ENCODE measurements at regions of chr12 and their contacts with region 1.

Region 1: GRCh38 chr12:7099290-7099996 is 7.2 kb upstream of the C1R start:
- DNase-seq: peak in 1 of 3 donors; percentile 40
- ATAC-seq: no peak
- H3K4me3 ChIP-seq: no peak overlapping the region
- H3K27ac ChIP-seq: no peak overlapping the region
- H3K4me1 ChIP-seq: peaks cover 0 to 20% (median under 1%) of the 10 kb centered on the region in 4 donors
- H3K27me3 ChIP-seq: no peaks in the 10 kb centered on the region
- CTCF ChIP-seq: no peak
- POLR2A ChIP-seq: no peak

Region 2: DNA sequence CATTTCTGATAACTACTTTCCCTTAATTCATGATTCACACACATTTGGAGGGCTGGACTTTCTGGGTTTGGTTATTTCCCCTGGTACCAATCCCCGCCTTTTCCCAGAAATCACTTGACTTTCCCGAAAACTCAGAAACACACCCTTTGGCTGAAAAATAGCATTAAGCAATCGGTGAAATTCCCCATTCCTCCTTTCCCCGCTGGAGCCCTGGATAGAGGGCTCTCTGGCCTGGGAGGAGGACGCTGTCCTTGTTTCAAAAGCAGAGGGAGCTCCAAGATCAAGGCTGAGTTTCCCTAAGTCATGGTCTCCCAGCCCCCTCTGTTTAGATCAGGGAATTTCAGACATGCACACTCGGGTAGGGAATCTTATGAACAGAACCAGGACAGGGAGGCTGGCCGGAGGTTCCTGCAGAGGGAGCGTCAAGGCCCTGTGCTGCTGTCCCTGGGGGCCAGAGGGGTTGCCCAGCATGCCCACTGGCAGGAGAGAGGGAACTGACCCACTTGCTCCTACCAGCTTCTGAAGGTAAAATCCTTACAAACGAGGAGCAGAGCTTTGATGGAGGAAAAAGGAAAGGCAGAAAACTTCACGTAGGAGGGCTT is 39.0 kb before region 1 on chr12 and contains the start of gene C1S:
- intact Hi-C with region 1: loop called in 1 of 2 experiments (anchors 5 kb)
- DNase-seq: peak; percentile 72 to 89 (median 73)
- ATAC-seq: peak; percentile 83 to 94 (median 85)
- H3K4me3 ChIP-seq: peak within 1 kb of the TSS; percentile 55 to 74 (median 71)
- H3K27ac ChIP-seq: peak within 1 kb of the TSS; percentile 87 to 97 (median 91)
- H3K4me1 ChIP-seq: peaks cover 0 to 46% (median 8%) of the 10 kb centered on the region in 4 donors
- H3K27me3 ChIP-seq: no peaks in the 10 kb centered on the region
- CTCF ChIP-seq: peak; percentile 81 to 93 (median 83)
- POLR2A ChIP-seq: peak; percentile 93
- total RNA-seq, gene C1S: 993 to 2,993 (median 1,796) TPM

Measured in right lobe of liver (tissue), 6 donors.